HepG2 (cell line): ENCODE measurements at regions of chr12 and their contacts with region 1.

Region 1: DNA sequence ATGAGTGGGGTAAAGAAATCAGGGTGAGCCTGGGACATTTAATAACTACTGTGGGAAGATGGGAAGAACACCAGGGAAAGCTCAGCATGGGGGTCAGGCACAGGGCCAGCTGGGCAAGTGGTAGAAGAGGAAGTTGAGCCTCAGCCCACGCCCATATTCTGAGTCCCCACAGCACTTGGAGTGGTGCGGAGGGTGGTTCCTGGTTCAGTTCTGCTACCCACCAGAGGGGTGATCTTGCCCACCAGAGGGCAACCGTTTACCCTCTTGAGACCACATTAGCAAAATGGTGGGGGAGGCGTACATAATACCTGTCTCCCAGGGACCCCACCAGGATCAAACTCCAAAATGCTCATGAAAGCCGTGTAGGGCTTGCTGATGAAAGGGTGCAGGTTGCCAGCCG is 16.8 kb upstream of the ANKRD33 start:
- DNase-seq: no peak
- ATAC-seq: no peak
- H3K4me3 ChIP-seq: no peak overlapping the region
- H3K27ac ChIP-seq: no peak overlapping the region
- H3K4me1 ChIP-seq: peaks cover 35% of the 10 kb centered on the region
- H3K27me3 ChIP-seq: peaks cover 9 to 44% of the 10 kb centered on the region in 2 experiments; a peak in 4 of 5 replicates
- CTCF ChIP-seq: no peak
- EP300 ChIP-seq: no peak
- POLR2A ChIP-seq: no peak
- RAD21 ChIP-seq: no peak

Region 2: DNA sequence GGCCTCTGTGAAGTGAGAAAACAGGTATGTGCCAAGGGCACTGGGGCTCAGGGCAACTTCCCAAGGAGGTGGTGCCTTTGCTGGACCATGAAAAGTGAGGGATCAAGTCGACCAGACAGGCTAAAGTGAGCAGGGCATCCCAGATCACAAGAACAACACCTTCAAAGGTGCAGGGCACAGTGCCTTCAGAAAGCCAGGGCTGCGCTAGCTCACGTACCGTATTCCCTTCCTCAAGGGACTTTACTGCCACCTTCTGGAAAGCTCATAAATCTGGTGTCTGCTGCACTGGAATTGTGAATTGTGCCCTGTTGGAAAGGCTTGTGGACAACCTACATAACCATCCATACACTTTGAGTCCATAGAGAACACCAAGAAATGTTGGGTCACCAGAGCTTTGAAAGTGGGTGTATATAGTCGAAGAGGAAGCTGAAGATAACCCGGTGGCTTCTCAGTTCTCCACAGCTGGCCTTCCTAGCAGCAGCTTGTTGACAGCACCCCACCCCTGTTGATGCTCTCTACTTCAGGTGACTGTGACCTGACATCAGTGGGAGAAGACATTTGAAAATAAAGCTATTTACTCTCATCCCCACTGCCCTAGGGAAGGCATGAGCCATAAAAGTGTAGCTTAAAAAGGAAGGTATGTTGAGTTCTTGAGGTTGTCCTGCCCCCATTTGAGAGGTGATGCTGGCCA is 47.1 kb before region 1 on chr12:
- CTCF ChIA-PET with region 1: interaction called, 3 read pairs
- POLR2A ChIA-PET with region 1: no interaction called
- in situ Hi-C with region 1: no loop called
- intact Hi-C with region 1: loop called (anchors 2 kb)
- DNase-seq: peak; percentile 59
- ATAC-seq: peak; percentile 84
- H3K4me3 ChIP-seq: no peak overlapping the region
- H3K27ac ChIP-seq: no peak overlapping the region
- H3K4me1 ChIP-seq: peaks cover 14% of the 10 kb centered on the region
- H3K27me3 ChIP-seq: no peaks in the 10 kb centered on the region
- CTCF ChIP-seq: peak; percentile 81
- EP300 ChIP-seq: no peak
- POLR2A ChIP-seq: no peak
- RAD21 ChIP-seq: peak; percentile 64

Region 3: GRCh38 chr12:51846911-51847642 is 24.0 kb before region 1 on chr12:
- CTCF ChIA-PET with region 1: interaction called, 5 read pairs
- POLR2A ChIA-PET with region 1: no interaction called
- in situ Hi-C with region 1: no loop called
- intact Hi-C with region 1: loop called (anchors 1 kb)
- DNase-seq: no peak
- ATAC-seq: peak; percentile 43
- H3K4me3 ChIP-seq: peak overlapping the region; percentile 71 to 82 (median 72)
- H3K27ac ChIP-seq: no peak overlapping the region
- H3K4me1 ChIP-seq: peaks cover 31% of the 10 kb centered on the region
- H3K27me3 ChIP-seq: peaks cover 0 to 9% of the 10 kb centered on the region in 2 experiments; a peak in 1 of 5 replicates
- CTCF ChIP-seq: no peak
- EP300 ChIP-seq: no peak
- POLR2A ChIP-seq: no peak
- RAD21 ChIP-seq: no peak

Region 4: GRCh38 chr12:51891843-51892242 is 20.7 kb after region 1 on chr12:
- CTCF ChIA-PET with region 1: no interaction called
- POLR2A ChIA-PET with region 1: no interaction called
- in situ Hi-C with region 1: no loop called
- intact Hi-C with region 1: no loop called
- DNase-seq: no peak
- ATAC-seq: no peak
- H3K4me3 ChIP-seq: no peak overlapping the region
- H3K27ac ChIP-seq: no peak overlapping the region
- H3K4me1 ChIP-seq: peaks cover 22% of the 10 kb centered on the region; the same call in 1 of the 2 replicates
- H3K27me3 ChIP-seq: peaks cover 7 to 22% of the 10 kb centered on the region in 2 experiments; a peak in 4 of 5 replicates
- CTCF ChIP-seq: peak; percentile 17; the same call in 1 of the 2 replicates
- EP300 ChIP-seq: no peak
- POLR2A ChIP-seq: no peak
- RAD21 ChIP-seq: no peak